PC-3 (cell line): ENCODE measurements at regions of chr1 and their contacts with region 1.

Region 1: DNA sequence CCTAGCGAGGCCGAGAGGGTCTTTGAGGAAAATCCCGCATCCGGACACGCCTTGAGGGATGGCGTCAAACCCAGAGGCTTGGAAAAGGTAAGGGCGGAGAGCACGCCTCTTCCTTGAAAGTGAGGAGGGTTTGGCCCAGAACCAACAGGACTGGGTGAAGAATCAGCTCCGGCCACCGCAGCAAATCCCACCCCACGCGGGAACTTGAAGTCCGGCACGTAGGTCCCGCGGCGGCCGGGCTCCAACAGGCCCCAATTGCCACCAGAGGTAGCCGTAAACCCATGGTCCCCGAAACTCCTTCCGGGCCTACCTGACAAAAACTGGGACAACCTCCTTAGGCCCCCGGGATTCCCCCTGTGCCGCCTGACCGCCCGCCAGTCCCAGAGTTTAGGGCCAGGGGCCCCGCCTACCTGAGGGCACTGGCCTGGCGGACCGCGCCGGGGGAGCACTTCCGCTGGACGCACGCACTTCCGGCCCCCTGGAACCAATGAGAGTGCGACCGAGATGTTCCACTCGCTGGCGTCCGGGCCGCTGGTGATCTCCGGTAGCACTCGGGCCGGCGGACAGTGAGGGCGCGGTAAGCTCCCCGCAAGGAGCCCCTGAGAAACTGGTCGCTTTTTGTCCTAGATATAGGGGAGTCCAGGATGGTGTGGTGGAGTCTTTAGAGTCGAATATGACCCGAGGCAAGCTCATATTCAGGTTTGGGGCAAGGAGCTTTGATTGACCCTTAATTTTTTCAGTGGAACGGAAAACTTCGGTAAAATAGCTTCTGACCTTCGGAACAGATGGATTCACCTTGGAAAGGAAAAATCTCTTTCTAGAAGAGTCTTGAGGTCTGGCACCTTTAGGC is at the starts of genes LZIC and NMNAT1:
- DNase-seq: peak; percentile 93
- ATAC-seq: peak; percentile 97
- H3K4me3 ChIP-seq: peak within 1 kb of the TSS; percentile 98
- H3K27ac ChIP-seq: peak within 1 kb of the TSS; percentile 93
- H3K4me1 ChIP-seq: peaks cover 10% of the 10 kb centered on the region; the same call in 1 of the 2 replicates
- H3K27me3 ChIP-seq: no peaks in the 10 kb centered on the region
- CTCF ChIP-seq: no peak
- total RNA-seq, gene LZIC: 27.2 and 32.5 TPM in 2 replicates
- total RNA-seq, gene NMNAT1: 4.6 and 7.3 TPM in 2 replicates

Region 2: DNA sequence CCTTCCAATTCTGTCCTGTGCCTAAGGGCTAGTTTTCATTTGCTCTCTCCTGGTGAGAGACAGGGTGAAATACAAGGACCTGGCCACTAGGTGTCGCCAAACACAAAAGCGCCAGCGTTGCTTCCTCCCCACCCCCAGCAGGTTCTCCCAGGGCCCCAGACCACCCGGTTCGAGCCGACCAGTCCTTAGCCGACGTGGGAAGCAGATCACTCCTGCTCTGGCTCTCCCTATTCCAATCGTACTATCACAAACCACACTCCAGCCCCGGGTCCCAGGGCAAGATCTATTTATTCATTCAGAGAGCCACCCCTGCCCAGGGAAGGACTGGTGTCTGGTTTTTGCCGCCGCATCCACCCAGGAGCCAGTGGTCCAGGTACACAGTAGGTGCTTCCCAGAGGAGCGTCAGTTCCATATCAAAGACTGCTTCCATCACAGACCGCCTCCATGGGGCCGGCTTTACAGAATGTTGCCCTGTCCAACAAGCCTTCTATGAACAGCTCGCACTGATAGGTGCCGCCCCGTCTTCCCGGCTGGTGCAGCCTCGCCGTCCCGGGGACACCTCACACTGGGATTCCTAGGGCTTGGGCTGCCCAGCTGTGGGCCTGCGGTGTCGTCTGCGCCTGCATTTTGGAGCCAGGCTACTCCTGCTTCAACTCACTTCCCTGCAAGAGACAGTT is 68.1 kb before region 1 on chr1:
- CTCF ChIA-PET with region 1: interaction called, 8 read pairs
- POLR2A ChIA-PET with region 1: interaction called, 3 read pairs
- intact Hi-C with region 1: loop called (anchors 1 kb)
- DNase-seq: peak; percentile 81
- ATAC-seq: peak; percentile 49
- H3K4me3 ChIP-seq: no peak overlapping the region
- H3K27ac ChIP-seq: no peak overlapping the region
- H3K4me1 ChIP-seq: peaks cover 30% of the 10 kb centered on the region
- H3K27me3 ChIP-seq: no peaks in the 10 kb centered on the region
- CTCF ChIP-seq: peak; percentile 95

Region 3: GRCh38 chr1:9890224-9890731 is 52.9 kb before region 1 on chr1:
- CTCF ChIA-PET with region 1: no interaction called
- POLR2A ChIA-PET with region 1: interaction called, 20 read pairs
- intact Hi-C with region 1: loop called (anchors 1 kb)
- DNase-seq: peak; percentile 94
- ATAC-seq: peak; percentile 53
- H3K4me3 ChIP-seq: no peak overlapping the region; the same call in 1 of the 2 replicates
- H3K27ac ChIP-seq: peak overlapping the region; percentile 99
- H3K4me1 ChIP-seq: peaks cover 56% of the 10 kb centered on the region
- H3K27me3 ChIP-seq: no peaks in the 10 kb centered on the region
- CTCF ChIP-seq: no peak

Region 4: DNA sequence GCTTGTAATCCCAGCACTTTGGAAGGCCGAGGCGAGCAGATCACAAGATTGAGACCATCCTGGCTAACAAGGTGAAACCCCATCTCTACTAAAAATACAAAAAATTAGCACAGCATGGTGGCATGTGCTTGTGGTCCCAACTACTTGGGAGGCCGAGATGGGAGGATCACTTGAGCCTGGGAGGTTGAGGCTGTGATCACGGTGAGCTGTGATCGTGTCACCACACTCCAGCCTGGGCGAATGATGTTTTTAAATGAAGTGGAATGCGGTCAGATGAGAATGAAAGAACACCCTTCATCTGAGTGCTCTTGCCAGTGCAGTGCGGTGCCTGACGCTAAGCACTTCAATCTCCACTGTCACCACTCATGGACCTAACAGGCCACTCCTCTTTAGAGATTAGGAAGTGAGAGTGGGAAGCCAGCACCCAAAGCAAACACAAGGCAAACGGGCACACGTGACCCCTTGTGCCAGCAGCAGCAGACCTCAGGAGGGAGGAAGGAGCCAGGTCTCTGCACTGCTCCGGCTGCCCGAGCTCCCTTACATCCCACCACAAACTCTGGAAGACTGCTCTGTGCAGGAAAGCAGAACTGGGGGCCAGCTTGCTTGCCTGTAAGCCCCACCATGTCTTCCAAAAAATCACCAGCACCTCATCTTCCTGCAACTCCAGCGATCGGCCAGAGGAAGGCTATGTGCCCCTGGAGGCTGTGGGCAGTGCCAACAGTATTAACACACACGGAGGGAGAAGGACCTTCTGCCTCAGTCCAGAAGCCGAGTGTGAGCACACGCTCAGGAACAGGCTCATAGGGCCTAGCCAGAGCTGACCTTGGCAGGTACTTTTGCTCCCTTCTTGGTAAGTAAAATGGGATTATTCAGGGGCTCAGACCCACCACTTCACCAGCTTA is 42.8 kb before region 1 on chr1:
- CTCF ChIA-PET with region 1: no interaction called
- POLR2A ChIA-PET with region 1: no interaction called
- intact Hi-C with region 1: no loop called
- DNase-seq: no peak
- ATAC-seq: no peak
- H3K4me3 ChIP-seq: no peak overlapping the region
- H3K27ac ChIP-seq: no peak overlapping the region
- H3K4me1 ChIP-seq: peaks cover 13% of the 10 kb centered on the region
- H3K27me3 ChIP-seq: no peaks in the 10 kb centered on the region
- CTCF ChIP-seq: no peak

Region 5: GRCh38 chr1:10152709-10153284 is 209.6 kb after region 1 on chr1:
- CTCF ChIA-PET with region 1: no interaction called
- POLR2A ChIA-PET with region 1: no interaction called
- intact Hi-C with region 1: loop called (anchors 10 kb)
- DNase-seq: peak; percentile 60
- ATAC-seq: peak; percentile 45; the same call in 1 of the 2 replicates
- H3K4me3 ChIP-seq: no peak overlapping the region
- H3K27ac ChIP-seq: no peak overlapping the region
- H3K4me1 ChIP-seq: no peaks in the 10 kb centered on the region
- H3K27me3 ChIP-seq: no peaks in the 10 kb centered on the region
- CTCF ChIP-seq: peak; percentile 76

Region 6: GRCh38 chr1:10960411-10961299 is 1017.5 kb after region 1 on chr1:
- CTCF ChIA-PET with region 1: no interaction called
- POLR2A ChIA-PET with region 1: no interaction called
- intact Hi-C with region 1: no loop called
- DNase-seq: peak; percentile 85
- ATAC-seq: peak; percentile 99
- H3K4me3 ChIP-seq: no peak overlapping the region; the same call in 1 of the 2 replicates
- H3K27ac ChIP-seq: no peak overlapping the region
- H3K4me1 ChIP-seq: no peaks in the 10 kb centered on the region
- H3K27me3 ChIP-seq: no peaks in the 10 kb centered on the region
- CTCF ChIP-seq: peak; percentile 85